Heart left ventricle (tissue), 16 donors: ENCODE measurements at regions of chr14 and their contacts with region 1.

Region 1: GRCh38 chr14:65281991-65282895 is 130.3 kb upstream of the FUT8 start:
- DNase-seq: peak in 1 of 5 donors; percentile 31
- ATAC-seq: peak; percentile 50 to 67 (median 54)
- H3K4me3 ChIP-seq: peak overlapping the region in 9 of 12 donors; percentile 6 to 44 (median 17)
- H3K27ac ChIP-seq: peak overlapping the region in 9 of 12 donors; percentile 3 to 69 (median 48)
- H3K4me1 ChIP-seq: peaks cover 0 to 18% (median 4%) of the 10 kb centered on the region in 12 donors
- H3K27me3 ChIP-seq: no peaks in the 10 kb centered on the region
- CTCF ChIP-seq: no peak
- POLR2A ChIP-seq: no peak

Region 2: DNA sequence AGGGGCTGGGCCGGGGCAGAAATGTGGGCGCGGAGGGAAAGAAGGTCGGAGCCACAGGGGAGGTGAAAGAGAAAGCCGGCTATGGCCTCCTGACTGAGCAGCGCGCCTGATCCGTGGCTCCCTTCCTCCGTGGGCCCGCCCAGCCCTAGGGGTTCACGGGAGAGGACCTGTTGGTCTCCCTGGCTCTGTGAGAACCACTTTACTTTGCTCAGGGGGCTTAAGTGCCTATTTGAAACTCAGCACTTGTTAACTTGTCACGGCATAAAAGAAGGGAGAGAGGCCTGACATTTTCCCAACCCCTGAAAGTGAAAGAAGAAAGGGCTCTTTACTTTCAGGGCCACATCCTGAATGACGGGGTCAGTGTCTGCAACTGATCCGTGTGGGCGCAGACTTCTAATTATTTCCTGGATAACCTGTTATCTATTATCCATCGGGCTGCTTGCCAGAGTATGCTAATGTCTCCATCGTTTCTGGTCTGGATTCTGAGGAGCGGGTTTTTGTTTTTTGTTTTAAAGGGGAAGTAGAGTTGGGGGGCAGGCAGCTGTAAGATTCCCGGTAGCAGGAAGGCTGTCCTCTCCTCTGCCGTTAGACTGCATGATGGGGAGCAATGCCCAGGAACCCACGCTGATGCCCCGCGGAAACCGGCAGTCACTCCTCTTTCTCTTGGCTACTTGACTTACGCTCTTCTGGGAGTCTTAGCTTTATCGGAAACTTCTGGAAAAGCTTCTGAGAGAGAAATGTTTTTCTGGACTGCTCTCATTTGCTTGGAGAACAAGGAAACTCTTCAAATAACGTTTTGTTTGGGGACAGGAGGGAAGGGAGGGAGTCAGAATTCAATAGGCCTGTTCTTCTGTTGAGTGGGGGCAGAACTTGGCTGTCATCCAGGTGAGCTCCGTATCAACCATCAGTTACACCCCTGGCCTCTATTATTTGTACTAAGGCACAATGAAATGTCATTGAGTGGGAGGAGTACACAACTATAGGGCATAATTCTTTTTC is 52.2 kb before region 1 on chr14:
- intact Hi-C with region 1: loop called in 2 of 10 experiments (anchors 5 kb)
- DNase-seq: peak; percentile 55 to 80 (median 73)
- ATAC-seq: peak; percentile 81 to 92 (median 89)
- H3K4me3 ChIP-seq: peak overlapping the region in 11 of 12 donors; percentile 12 to 60 (median 44)
- H3K27ac ChIP-seq: peak overlapping the region; percentile 75 to 97 (median 88)
- H3K4me1 ChIP-seq: peaks cover 0 to 41% (median 13%) of the 10 kb centered on the region in 12 donors
- H3K27me3 ChIP-seq: no peaks in the 10 kb centered on the region
- CTCF ChIP-seq: no peak
- POLR2A ChIP-seq: peak in 1 of 2 donors; percentile 28